ENCODE measurements at regions of chr17 and their contacts with region 1.

Region 1: DNA sequence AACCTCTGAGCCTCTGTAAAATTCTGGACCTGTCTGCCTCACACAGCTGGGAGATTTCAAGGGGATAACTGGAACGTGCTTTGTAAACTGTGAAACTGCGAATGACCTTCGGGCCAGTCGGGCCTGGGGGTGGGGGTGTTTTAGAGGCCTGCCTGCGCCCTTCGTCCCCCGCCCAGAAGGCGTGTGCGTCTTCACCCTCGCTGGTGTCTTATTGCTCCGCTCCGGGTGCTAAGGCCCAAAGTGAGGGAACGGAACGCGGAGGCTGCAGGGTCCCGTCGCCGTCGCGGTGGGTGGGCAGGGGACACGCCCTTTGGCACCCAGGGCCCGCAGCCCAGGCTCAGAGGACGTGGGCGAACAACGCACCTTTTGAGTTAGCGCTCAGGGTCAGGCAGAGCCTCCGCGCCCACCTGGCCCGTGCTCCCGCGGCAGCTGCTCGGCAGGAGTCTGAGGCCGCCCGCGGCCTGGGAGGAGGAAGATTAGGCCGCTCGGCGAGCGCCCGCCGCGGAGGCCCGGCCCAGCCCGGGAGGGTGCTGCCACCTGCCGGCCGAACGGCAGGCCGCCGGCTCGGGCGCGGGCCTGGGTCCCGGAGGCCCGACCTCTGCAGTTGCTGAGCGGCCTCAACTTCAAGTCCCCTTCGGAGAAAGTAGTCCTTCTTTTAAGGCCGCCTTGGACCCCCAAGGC is 29.7 kb downstream of the DCAKD start:
- DNase-seq: peak; percentile 47
- ATAC-seq: peak; percentile 77
- H3K4me3 ChIP-seq: peak overlapping the region; percentile 29
- H3K27ac ChIP-seq: peak overlapping the region; percentile 72
- H3K4me1 ChIP-seq: peaks cover 26% of the 10 kb centered on the region
- H3K27me3 ChIP-seq: peaks cover 4% of the 10 kb centered on the region; the same call in 1 of the 2 replicates
- CTCF ChIP-seq: peak; percentile 95
- POLR2A ChIP-seq: no peak
- RAD21 ChIP-seq: peak; percentile 91

Region 2: DNA sequence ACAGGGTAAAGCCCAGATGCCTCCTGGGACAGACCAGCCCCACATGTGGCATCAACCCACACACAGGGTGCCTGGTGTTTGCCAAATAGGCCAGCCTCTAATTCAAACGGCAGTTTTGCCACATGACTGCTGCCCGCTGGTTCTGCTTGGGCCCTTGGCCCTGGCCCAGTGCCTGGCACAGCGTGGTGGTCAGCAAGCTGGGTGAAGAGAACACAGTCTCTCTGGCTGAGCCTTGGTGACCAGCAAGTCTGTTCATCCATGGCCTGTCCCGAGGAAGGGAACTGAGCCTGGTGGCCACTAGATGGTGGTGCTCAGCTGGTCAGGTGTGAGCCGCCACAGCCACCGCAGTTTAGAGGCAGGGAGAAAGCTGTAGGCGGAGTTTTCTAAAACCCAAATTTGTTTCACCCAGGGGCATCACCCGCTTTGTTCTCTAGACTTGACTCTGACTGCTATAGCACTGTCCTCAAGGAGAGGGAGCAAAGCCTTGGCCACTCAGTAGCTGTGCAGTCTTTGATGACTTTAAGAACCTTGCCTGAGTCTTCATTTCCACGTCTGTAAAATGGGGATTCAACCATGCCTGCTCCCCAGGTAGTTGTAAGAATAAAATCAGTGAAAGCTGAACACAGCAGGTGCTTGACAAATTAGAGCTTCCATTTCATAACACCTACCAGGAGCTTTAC is 101.7 kb before region 1 on chr17:
- CTCF ChIA-PET with region 1: interaction called, 62 read pairs
- POLR2A ChIA-PET with region 1: no interaction called
- dilution Hi-C with region 1: no loop called
- in situ Hi-C with region 1: no loop called
- intact Hi-C with region 1: loop called (anchors 1 kb)
- DNase-seq: peak; percentile 80
- ATAC-seq: peak; percentile 96
- H3K4me3 ChIP-seq: no peak overlapping the region
- H3K27ac ChIP-seq: no peak overlapping the region
- H3K4me1 ChIP-seq: peaks cover 9% of the 10 kb centered on the region; the same call in 1 of the 2 replicates
- H3K27me3 ChIP-seq: peaks cover 5% of the 10 kb centered on the region; the same call in 1 of the 2 replicates
- CTCF ChIP-seq: peak; percentile 94
- POLR2A ChIP-seq: 0 out of 2 replicates have a peak, but pooled peaks have one; percentile 43
- RAD21 ChIP-seq: peak; percentile 95

Region 3: DNA sequence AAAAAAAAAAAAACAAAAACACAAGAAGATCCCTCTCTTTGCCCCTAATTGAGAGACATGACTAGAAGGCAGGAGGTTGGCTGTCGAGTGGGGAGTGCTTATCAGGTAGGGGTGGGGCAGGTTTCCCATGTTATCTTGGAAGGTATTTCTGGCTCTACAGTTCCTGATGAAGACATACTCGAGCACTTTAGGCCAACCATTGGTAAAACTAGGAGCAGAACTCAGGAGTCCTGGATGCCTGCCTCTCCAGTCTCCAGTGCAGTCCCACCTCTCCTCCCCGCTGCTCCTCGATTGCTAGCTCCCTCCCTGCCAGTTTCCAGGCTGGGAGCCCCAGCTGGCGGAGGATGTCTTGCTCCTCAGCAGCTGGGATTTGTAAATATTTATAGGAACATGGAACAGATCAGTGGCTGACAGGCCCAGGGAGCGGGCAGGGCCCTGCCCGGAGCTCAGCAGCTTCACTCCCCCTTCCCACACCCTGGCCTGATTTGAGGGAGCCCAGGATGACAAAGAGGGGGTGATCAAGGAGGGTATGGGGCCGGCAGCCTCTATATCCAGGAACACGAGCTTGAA is 42.2 kb before region 1 on chr17:
- CTCF ChIA-PET with region 1: interaction called, 4 read pairs
- POLR2A ChIA-PET with region 1: no interaction called
- dilution Hi-C with region 1: no loop called
- in situ Hi-C with region 1: no loop called
- intact Hi-C with region 1: loop called (anchors 2 kb)
- DNase-seq: peak; percentile 82
- ATAC-seq: peak; percentile 86
- H3K4me3 ChIP-seq: no peak overlapping the region
- H3K27ac ChIP-seq: peak overlapping the region; percentile 94
- H3K4me1 ChIP-seq: peaks cover 39% of the 10 kb centered on the region
- H3K27me3 ChIP-seq: peaks cover 4% of the 10 kb centered on the region; the same call in 1 of the 2 replicates
- CTCF ChIP-seq: no peak
- POLR2A ChIP-seq: no peak
- RAD21 ChIP-seq: no peak

Measured in IMR-90 (cell line).